ENCODE measurements at regions of chr2 and their contacts with region 1.

Region 1: DNA sequence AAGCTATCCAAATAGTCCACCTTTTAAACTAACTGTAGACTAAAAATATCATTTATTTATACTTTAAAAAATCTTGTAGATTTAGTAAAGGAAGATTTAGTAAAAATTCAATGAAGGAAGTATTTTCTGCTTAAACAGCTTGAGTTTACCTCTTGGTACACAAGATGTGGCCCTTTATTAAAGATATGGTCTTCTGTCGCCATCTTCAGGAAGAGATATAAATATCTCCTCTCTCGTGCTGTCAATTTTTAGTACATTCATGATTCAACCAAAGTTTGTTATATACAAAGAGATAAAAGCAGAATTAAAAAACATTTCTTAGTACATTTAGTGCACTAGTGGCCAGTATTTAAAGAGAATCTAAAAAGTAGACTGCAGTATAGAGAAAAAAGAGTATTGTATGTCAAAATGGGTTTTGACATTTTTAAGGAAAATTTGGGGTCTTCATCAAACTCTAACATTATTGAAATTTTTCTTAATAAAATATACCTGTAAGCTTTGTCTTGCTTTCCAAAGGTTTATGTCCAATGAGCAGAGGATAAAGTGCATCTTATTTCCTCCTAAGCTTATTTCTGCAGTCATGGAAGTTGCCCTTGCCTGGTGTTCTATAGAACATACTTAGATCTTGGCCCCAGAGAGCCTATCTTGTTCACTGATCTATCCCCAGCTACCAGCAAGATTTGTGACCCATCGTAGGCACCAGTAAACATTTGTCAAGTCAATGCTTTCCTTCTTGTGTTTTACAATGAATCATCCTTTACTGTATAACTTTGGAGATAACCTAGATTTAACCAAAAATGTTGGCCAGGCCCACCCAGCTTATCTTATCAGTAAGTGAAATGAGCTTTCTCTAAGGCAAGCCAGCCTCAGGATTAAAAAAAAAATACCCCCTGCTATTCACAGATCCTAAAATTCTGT is 18.5 kb upstream of the EML6 start:
- DNase-seq: no peak
- ATAC-seq: peak; percentile 48 to 66

Region 2: DNA sequence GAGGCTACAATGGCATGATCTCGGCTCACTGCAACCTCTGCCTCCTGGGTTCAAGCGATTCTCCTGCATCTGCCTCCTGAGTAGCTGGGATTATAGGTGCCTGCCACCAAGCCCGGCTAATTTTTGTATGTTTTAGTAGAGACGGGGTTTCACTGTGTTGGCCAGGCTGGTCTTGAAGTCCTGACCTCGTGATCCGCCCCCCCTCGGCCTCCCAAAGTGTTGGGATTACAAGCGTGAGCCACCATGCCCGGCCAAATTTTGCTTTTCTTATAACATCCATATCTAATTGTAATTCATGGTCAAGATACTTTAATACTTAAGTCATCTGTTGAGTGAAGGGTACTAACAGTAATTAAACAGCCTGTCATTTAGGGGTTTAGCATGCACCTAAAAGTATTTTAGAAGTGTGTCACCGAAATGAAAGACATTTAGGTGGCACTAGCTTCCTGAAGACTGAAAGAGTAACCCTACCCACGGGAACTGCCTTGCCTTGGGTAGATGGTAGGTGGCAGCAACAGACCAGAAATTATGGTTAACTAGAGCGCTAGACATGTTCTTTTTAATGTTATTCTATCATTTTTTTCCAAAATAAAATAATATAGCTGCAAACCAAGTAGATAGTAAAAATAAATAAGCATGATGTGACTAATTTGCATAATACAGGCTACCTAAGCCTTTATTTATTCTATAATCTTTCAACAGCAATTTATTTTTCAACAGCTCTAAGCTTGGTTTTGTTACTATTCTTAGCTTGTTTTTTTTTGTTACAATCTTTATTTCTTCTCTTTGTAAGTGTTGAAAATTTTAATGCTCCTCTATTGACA is 598.1 kb before region 1 on chr2:
- intact Hi-C with region 1: loop called in 1 of 2 experiments (anchors 5 kb)
- DNase-seq: no peak
- ATAC-seq: peak; percentile 44 to 79

Region 3: DNA sequence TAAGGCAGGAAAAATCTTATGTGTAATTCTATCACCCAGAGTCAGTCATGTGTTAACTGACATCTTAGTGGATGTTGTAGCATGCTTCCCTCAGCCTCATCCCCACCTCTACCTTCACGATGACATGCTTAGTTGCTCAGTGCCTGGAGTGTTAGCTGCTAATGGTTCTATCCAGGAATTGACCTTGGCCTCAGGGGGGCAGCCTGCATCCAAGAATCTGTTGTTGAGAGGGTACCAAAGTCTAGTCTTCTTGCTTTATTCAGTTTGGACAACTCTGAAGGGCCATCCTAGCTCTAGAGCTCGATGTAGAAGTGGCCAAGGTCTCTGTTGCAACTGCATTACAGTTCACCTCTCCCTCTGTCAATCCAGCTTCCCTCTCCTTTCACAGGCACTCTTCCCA is 528.4 kb before region 1 on chr2:
- intact Hi-C with region 1: loop called in 1 of 2 experiments (anchors 5 kb)
- DNase-seq: peak; percentile 58
- ATAC-seq: peak; percentile 79 to 83